HCT116 (cell line): ENCODE measurements at regions of chr18 and their contacts with region 1.

Region 1: DNA sequence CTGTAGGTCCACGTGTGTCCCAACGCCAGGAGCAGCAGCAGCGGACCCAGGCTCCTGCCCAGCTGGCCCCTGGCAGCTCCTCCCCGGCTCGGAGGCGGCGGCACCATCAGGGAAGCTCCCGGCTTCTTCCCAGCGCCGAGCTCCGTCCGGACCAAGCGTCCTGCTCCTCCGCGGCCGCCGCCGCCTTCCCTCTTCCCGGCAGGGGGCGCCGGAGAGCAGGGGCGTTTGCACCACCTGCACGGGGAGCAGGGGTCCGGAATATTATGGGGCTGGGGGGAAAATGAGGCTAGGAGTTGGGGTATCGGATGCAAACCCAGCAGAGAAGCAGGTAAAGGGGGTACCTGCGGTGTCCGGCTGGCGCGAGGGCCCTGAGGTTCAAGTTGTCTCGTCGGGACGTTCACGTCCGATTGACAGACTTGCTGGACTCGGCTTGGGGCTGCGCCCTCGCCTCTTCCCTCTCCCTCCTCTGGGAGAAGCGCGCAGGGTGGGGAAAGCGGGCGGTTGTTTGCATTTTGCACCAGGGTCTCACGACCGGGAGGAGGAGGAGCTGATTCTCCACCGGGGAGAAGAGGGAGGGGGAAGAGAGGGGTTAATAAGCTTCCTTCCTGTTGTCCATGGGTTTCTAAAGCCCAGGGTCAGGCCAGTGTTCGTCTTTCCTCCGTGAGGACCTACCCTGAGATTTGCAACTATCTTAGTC is at the start of gene CCBE1:
- DNase-seq: peak; percentile 29
- ATAC-seq: peak; percentile 92
- H3K4me3 ChIP-seq: peak within 1 kb of the TSS; percentile 50 to 61
- H3K27ac ChIP-seq: no peak within 1 kb of the TSS; the same call in 1 of the 2 replicates
- H3K4me1 ChIP-seq: peaks cover 4 to 10% of the 10 kb centered on the region in 2 experiments; a peak in 2 of 4 replicates
- H3K27me3 ChIP-seq: peaks cover under 1% of the 10 kb centered on the region; the same call in 1 of the 2 replicates
- CTCF ChIP-seq: peak; percentile 70 to 97 (median 92); a peak in 5 of 6 replicates
- POLR2A ChIP-seq: no peak
- RAD21 ChIP-seq: peak; percentile 57
- total RNA-seq, gene CCBE1: 0.84 TPM

Region 2: DNA sequence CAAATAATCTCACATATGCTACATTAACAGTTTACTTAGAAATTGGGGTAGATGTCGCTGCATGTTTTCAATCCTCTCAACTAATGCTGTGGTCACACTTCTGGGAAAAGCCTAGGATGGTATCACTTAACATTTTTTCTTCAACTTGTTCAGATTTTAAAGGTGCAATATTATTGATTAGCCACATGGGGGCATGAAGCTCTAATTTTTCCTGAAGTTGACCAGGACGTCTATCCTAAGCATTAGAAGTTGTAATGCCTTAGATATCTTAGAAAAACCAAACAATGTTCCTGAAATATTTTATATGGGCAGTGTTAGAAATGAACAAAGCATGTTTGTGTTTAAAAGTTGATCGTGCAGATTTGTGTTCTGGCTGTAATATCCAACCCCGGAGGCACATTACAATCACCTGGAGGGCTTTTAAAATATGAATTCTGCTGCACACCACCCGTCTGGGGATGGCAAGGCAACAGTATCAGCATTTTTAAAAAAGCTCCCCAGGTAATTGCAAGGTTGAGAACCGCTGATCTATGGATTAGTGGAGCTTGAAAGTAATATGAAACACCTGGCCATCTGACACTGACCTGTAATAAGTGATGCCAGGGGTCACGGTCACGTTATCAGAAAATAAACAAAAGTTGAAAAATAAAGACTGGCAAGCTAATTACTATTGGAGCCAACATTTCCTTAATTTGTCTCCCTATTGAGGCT is 237.9 kb before region 1 on chr18:
- CTCF ChIA-PET with region 1: interaction called, 10 read pairs
- POLR2A ChIA-PET with region 1: no interaction called
- RAD21 ChIA-PET with region 1: no interaction called
- intact Hi-C with region 1: no loop called
- DNase-seq: peak; percentile 10
- ATAC-seq: peak; percentile 69
- H3K4me3 ChIP-seq: no peak overlapping the region
- H3K27ac ChIP-seq: no peak overlapping the region
- H3K4me1 ChIP-seq: no peaks in the 10 kb centered on the region
- H3K27me3 ChIP-seq: peaks cover 16% of the 10 kb centered on the region
- CTCF ChIP-seq: peak; percentile 43 to 65 (median 49); a peak in 4 of 6 replicates
- POLR2A ChIP-seq: no peak
- RAD21 ChIP-seq: peak; percentile 71

Region 3: GRCh38 chr18:59536166-59536565 is 161.2 kb before region 1 on chr18:
- CTCF ChIA-PET with region 1: no interaction called
- POLR2A ChIA-PET with region 1: no interaction called
- RAD21 ChIA-PET with region 1: no interaction called
- intact Hi-C with region 1: no loop called
- DNase-seq: no peak
- ATAC-seq: no peak
- H3K4me3 ChIP-seq: no peak overlapping the region
- H3K27ac ChIP-seq: no peak overlapping the region
- H3K4me1 ChIP-seq: no peaks in the 10 kb centered on the region
- H3K27me3 ChIP-seq: peaks cover 57% of the 10 kb centered on the region
- CTCF ChIP-seq: no peak
- POLR2A ChIP-seq: no peak
- RAD21 ChIP-seq: no peak

Region 4: DNA sequence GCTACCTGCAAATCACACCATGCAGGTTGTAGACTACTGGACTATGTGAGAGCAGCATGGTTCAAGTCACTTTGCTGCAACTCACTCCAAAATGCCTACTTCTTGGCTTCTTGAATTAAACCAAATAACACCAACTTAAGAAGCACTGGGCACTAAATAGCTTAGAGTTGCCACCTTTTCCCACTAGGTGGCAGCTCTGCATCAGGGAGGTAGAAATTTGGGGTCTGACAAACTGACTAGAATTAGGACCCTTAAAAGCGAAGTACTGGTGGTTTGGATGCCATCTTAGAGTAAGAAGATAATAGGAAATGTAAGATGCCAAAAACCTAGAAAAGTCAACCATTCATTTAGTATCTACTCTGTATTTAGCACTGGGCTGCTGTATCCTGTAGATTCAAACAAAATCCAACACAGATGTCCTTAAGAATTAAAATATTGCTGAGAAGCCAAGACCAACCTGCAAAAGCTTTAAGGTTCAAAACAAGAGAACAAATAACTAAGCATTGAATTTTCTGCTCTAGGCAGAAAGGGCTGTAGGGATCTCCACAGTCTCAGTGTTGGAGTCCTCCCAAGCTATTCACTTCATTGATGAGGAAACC is 65.7 kb before region 1 on chr18:
- CTCF ChIA-PET with region 1: interaction called, 17 read pairs
- POLR2A ChIA-PET with region 1: no interaction called
- RAD21 ChIA-PET with region 1: interaction called, 3 read pairs
- intact Hi-C with region 1: no loop called
- DNase-seq: peak; percentile 24
- ATAC-seq: peak; percentile 69
- H3K4me3 ChIP-seq: no peak overlapping the region
- H3K27ac ChIP-seq: no peak overlapping the region
- H3K4me1 ChIP-seq: no peaks in the 10 kb centered on the region
- H3K27me3 ChIP-seq: peaks cover 30% of the 10 kb centered on the region; the same call in 1 of the 2 replicates
- CTCF ChIP-seq: peak; percentile 53 to 86 (median 72); a peak in 5 of 6 replicates
- POLR2A ChIP-seq: no peak
- RAD21 ChIP-seq: peak; percentile 74

Region 5: GRCh38 chr18:59685501-59685900 is 11.9 kb before region 1 on chr18:
- CTCF ChIA-PET with region 1: interaction called, 32 read pairs
- POLR2A ChIA-PET with region 1: no interaction called
- RAD21 ChIA-PET with region 1: no interaction called
- intact Hi-C with region 1: no loop called
- DNase-seq: no peak
- ATAC-seq: no peak
- H3K4me3 ChIP-seq: no peak overlapping the region
- H3K27ac ChIP-seq: no peak overlapping the region
- H3K4me1 ChIP-seq: no peaks in the 10 kb centered on the region
- H3K27me3 ChIP-seq: peaks cover 54% of the 10 kb centered on the region
- CTCF ChIP-seq: no peak
- POLR2A ChIP-seq: no peak
- RAD21 ChIP-seq: no peak

Region 6: GRCh38 chr18:59712311-59712710 is 14.9 kb after region 1 on chr18:
- CTCF ChIA-PET with region 1: interaction called, 17 read pairs
- POLR2A ChIA-PET with region 1: no interaction called
- RAD21 ChIA-PET with region 1: no interaction called
- intact Hi-C with region 1: no loop called
- DNase-seq: no peak
- ATAC-seq: no peak
- H3K4me3 ChIP-seq: no peak overlapping the region
- H3K27ac ChIP-seq: no peak overlapping the region
- H3K4me1 ChIP-seq: peaks cover 0 to 7% of the 10 kb centered on the region in 2 experiments; a peak in 2 of 4 replicates
- H3K27me3 ChIP-seq: no peaks in the 10 kb centered on the region
- CTCF ChIP-seq: no peak
- POLR2A ChIP-seq: no peak
- RAD21 ChIP-seq: no peak

Region 7: GRCh38 chr18:59783138-59783537 is 85.8 kb after region 1 on chr18:
- CTCF ChIA-PET with region 1: interaction called, 11 read pairs
- POLR2A ChIA-PET with region 1: no interaction called
- RAD21 ChIA-PET with region 1: no interaction called
- intact Hi-C with region 1: no loop called
- DNase-seq: peak; percentile 85
- ATAC-seq: peak; percentile 96
- H3K4me3 ChIP-seq: peak overlapping the region; percentile 22 to 34; a peak in 3 of 4 replicates
- H3K27ac ChIP-seq: no peak overlapping the region
- H3K4me1 ChIP-seq: peaks cover 11 to 31% of the 10 kb centered on the region in 2 experiments
- H3K27me3 ChIP-seq: no peaks in the 10 kb centered on the region
- CTCF ChIP-seq: peak; percentile 66 to 82 (median 78); a peak in 5 of 6 replicates
- POLR2A ChIP-seq: no peak
- RAD21 ChIP-seq: peak; percentile 79

Region 8: DNA sequence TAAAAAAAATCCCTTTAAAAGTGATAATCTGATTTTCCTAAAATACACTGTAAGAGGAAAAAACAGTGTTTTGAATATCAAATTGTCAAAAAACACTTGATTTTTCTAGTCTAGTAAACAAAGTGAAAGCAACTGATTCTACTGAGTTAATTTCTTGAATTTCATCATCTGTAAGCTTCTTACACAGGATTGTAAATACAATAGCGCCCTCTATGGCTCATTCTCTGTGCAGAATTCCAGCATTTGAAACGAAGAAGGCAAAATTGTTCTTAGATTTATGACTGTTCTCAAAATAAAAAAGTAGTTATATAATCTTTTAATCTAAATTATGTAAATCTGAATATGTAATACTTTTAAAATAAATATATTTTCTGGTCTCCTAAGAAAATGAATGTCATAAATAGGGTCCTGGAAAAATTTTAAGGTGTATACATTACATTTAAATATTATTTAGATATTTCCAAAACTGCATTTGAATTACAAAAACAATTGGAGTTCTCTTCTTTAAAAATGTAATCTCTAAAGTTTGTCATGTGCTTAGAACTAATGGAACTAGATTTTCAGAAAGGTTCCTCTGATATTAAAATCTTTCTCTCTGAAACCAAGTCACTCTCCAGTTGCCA is 852.1 kb after region 1 on chr18:
- CTCF ChIA-PET with region 1: no interaction called
- POLR2A ChIA-PET with region 1: no interaction called
- RAD21 ChIA-PET with region 1: no interaction called
- intact Hi-C with region 1: loop called (anchors 10 kb)
- DNase-seq: peak; percentile 66
- ATAC-seq: no peak
- H3K4me3 ChIP-seq: peak overlapping the region in 1 of 2 experiments; percentile 3; a peak in 1 of 4 replicates
- H3K27ac ChIP-seq: no peak overlapping the region
- H3K4me1 ChIP-seq: no peaks in the 10 kb centered on the region
- H3K27me3 ChIP-seq: no peaks in the 10 kb centered on the region
- CTCF ChIP-seq: peak; percentile 67 to 78 (median 73); a peak in 5 of 6 replicates
- POLR2A ChIP-seq: no peak
- RAD21 ChIP-seq: peak; percentile 87